Activated T-helper 1 cell treated with anti-CD3 and anti-CD28 coated beads, Interleukin-12 subunit alpha, Interleukin-12 subunit beta, Interleukin-2, Interleukin-4 antibody, amounts not matched to agents 30 ng/mL and 10 ng/mL and 1 ng/mL, durations not matched to agents 14 hours and 24 hours and 36 hours (primary cell): ENCODE measurements at regions of chr3 and their contacts with region 1.

Region 1: DNA sequence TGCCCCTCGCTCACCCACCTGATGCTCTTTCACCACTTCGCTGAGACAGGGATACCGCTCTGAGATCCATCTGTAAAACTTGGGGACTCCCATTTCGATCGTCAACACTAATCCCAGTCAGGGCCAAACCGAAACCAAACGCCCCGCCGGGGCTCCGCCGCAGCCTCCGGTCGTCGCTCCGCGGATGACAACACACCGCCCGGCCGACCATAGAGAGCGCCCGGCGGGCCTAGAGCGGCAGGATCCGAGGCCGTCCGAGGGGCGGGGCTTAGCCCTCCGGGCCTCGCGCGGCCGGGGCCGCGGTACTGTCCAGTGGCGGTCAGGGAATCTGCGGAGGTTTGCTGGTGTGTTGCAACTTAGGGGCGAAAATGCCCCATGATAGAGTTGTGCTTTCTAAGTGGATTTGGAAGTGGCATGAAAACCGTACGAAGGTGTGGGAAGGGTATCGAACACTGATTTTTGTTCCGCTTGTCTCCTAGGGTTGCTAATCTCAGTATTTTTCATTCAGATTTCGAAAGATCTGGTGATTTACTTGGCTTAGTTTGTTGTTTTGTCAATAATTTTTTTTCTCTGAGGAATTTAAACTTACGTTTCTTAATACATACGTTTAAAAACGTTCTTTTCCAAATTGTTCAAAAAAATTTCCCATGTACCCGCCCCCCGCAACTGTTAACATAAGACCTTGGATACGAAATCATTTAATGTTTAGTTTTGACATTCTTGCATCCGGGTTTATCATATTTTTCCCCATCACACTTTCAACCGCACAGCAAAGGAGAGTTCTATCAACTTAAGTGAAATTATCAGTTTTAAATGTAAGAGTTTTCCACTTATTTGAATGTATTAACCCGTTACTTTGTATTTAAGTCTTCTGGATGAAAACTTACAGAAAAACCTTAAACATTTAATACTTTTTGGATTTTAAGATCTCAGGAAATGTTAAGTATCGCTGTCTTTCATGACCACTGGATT is at the start of gene XRN1:
- DNase-seq: peak; percentile 94
- H3K4me3 Mint-ChIP-seq: peak within 1 kb of the TSS; percentile 99
- H3K27ac Mint-ChIP-seq: peak within 1 kb of the TSS; percentile 99
- H3K4me1 Mint-ChIP-seq: peaks cover 44% of the 10 kb centered on the region
- H3K27me3 Mint-ChIP-seq: no peaks in the 10 kb centered on the region
- total RNA-seq, gene XRN1: 48.0 and 52.7 TPM in 2 replicates

Region 2: DNA sequence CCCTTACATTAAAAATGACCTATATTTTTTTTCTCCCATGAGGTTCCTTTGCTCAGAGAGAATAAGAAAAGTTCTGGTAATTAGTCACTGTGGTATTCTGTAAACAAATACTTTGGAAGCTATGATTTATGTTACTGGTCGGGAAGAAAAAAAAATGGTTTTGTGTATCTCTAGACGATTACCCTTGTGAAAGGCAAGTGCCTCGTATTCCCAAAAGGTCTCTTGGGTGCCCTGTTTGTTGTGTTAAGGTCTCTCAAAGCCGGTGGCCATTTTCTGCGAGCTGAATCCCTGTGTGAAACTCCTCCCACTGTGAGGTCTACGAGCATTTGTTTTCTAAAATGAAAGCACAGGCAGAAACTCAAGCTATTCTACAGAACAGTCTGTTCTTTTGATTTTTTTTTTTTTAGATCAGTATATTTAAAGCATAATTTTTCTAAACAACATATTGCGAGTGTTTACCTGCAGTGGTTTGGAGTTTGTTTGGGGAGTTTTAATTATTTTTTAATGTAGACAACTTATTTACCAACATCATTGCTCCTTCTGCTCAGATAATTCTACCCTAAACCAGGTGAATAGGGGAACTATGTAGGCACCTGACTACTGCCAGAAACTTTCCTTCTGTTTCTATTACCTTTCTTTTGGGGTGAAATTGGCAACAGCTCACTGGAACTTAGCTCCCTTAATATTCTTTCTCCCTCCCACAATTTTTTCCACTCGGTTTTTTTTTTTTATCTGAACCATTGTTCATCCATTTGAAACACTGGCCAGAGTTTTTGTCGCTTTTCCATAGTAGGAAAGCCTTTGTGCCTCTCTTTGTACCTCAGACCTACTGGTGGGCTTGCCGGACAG is 1035.8 kb before region 1 on chr3:
- intact Hi-C with region 1: loop called (anchors 5 kb)
- DNase-seq: peak; percentile 55
- H3K4me3 Mint-ChIP-seq: peak overlapping the region; percentile 85
- H3K27ac Mint-ChIP-seq: peak overlapping the region; percentile 98
- H3K4me1 Mint-ChIP-seq: peaks cover 61% of the 10 kb centered on the region
- H3K27me3 Mint-ChIP-seq: no peaks in the 10 kb centered on the region

Region 3: DNA sequence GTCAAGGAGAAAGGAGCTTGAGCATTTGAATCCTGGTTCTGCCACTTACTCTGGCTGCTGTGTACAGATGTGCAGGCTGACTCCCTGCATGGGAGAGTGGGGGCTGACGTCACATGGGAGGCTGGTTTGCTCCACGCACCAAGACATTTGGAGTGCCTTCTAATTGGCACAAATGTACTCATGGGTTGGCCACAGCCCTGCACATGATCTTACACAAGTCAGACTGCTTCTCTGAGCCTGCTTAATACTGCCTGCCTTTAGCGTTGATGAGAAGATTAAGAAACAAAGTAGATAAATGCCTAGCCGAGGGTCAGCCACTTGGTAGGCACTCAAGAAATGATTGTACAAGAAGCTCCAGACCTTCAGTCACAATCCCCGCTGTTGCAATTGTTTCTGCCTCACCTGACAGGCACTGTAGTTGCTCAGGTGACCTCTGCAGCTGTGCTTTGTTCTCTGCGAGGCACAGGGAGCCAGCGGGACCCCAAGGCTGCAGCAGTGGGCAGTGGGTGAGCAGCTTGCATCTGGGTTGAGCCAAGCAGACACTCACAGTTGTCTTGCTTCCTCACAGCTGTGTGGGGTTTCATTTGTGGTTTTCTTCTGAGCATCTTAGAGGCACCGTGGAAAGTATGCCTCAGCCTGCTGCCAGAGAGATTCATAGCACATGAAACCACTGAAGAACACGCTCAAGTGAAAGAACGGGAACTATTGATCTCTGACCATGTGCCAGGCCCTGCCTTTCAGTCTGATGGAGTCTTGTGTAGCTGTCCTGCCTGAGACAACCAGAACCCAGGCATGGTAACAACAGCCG is 651.9 kb before region 1 on chr3:
- intact Hi-C with region 1: loop called (anchors 1 kb)
- DNase-seq: peak; percentile 74
- H3K4me3 Mint-ChIP-seq: peak overlapping the region; percentile 79
- H3K27ac Mint-ChIP-seq: peak overlapping the region; percentile 99
- H3K4me1 Mint-ChIP-seq: peaks cover 47% of the 10 kb centered on the region
- H3K27me3 Mint-ChIP-seq: peaks cover 3% of the 10 kb centered on the region

Region 4: DNA sequence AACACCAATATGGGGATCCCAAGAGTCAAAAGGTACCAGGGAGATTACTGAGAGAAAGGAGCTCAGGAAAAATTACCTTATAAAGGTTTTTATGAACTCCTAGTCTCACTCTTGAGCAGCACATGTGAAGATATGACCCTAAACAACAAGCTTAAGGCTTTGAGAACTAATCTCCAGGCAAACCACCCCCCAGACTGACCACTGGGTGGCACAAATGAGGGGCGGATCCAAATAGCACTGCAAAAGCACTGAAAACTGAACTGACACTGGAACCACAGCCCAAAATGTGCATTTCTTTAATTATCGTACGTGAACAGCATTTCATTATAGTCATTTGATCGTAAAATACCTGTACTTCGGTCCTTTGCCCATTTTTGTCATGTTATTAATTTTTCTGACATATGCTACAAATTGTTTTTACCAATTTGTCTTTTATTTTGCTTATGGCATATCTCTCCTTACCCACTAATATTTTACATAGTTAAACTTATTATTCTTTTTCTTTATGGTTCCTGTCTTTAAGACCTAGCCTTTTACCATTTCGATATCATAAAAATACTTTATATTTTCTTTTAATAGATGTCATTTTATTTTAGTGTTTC is 267.3 kb before region 1 on chr3:
- intact Hi-C with region 1: no loop called
- DNase-seq: no peak
- H3K4me3 Mint-ChIP-seq: no peak overlapping the region
- H3K27ac Mint-ChIP-seq: no peak overlapping the region
- H3K4me1 Mint-ChIP-seq: no peaks in the 10 kb centered on the region
- H3K27me3 Mint-ChIP-seq: no peaks in the 10 kb centered on the region

Region 5: DNA sequence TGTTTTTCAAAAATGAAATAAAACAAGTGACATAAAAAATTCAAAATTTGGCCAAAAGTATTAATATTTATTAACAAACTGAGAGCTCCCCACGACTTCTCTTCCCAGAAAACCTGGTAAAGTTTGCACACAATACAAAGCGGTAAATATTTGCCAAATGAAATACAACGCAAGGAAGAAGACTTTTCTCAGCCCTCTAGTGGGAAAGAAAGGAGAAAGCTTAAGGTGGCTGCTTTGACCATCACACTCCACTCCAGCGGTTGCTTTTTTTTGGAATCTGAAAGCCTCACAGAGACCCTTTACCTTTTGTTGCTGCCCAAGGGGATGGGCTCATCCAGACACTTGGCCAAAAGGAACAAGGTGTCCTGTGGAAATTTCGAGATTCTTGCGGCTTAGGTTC is 221.7 kb before region 1 on chr3:
- intact Hi-C with region 1: loop called (anchors 2 kb)
- DNase-seq: no peak
- H3K4me3 Mint-ChIP-seq: peak overlapping the region; percentile 72
- H3K27ac Mint-ChIP-seq: no peak overlapping the region
- H3K4me1 Mint-ChIP-seq: peaks cover 20% of the 10 kb centered on the region
- H3K27me3 Mint-ChIP-seq: no peaks in the 10 kb centered on the region

Region 6: DNA sequence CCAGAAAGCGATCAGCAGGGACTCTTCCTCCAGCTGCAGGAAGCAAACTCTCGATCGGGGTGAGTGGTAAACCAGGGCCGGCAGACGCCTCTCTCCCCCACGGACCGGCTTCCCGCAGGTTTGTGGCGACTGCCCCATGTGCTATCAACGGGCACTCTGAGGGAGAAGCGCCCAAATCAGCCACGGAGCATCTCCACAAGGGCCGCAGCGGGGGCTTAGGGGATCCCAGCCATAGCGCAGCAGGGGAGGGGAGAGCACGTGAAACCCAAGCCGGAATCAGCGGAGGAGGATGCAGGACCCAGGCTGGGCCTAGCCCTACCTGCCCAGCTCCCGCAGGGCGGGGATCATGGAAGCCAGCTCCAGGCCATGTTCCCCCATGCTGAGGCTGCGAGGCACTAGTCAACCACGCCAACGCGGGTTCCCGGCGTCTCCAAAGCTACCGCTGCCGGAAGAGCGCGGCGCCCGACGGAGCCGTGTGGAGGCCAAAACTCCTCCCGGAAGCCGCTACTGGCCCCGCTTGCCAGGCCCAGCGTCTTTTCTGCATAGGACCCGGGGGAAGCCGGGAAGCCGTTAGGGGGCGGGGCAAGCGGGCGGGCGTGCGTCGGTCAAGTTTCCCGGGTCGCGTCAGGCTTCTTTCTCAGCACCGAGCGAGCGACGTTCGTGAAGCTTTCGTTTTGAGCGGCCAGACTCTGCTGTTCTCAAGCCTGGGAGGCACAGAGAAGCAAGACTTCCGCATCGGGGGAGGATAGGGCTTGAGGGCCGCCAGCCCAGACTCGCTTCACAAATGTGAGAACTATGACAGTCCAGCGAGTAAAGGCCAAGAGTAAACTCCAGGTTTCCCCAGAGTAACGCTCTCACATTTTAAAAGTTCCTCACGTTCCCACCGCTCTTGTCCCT is 130.4 kb after region 1 on chr3 and contains the start of gene ATR:
- intact Hi-C with region 1: loop called (anchors 1 kb)
- DNase-seq: peak; percentile 96
- H3K4me3 Mint-ChIP-seq: peak within 1 kb of the TSS; percentile 100
- H3K27ac Mint-ChIP-seq: peak within 1 kb of the TSS; percentile 100
- H3K4me1 Mint-ChIP-seq: peaks cover 46% of the 10 kb centered on the region
- H3K27me3 Mint-ChIP-seq: peaks cover 10% of the 10 kb centered on the region
- total RNA-seq, gene ATR: 27.0 and 35.5 TPM in 2 replicates

Region 7: GRCh38 chr3:143119009-143119914 is 671.1 kb after region 1 on chr3 and contains the start of gene CHST2:
- intact Hi-C with region 1: loop called (anchors 5 kb)
- DNase-seq: peak; percentile 62
- H3K4me3 Mint-ChIP-seq: peak within 1 kb of the TSS; percentile 92
- H3K27ac Mint-ChIP-seq: peak within 1 kb of the TSS; percentile 74
- H3K4me1 Mint-ChIP-seq: peaks cover 35% of the 10 kb centered on the region
- H3K27me3 Mint-ChIP-seq: peaks cover 10% of the 10 kb centered on the region
- total RNA-seq, gene CHST2: 11.3 and 11.4 TPM in 2 replicates